ENCODE measurements at regions of chr17 and their contacts with region 1.

Region 1: DNA sequence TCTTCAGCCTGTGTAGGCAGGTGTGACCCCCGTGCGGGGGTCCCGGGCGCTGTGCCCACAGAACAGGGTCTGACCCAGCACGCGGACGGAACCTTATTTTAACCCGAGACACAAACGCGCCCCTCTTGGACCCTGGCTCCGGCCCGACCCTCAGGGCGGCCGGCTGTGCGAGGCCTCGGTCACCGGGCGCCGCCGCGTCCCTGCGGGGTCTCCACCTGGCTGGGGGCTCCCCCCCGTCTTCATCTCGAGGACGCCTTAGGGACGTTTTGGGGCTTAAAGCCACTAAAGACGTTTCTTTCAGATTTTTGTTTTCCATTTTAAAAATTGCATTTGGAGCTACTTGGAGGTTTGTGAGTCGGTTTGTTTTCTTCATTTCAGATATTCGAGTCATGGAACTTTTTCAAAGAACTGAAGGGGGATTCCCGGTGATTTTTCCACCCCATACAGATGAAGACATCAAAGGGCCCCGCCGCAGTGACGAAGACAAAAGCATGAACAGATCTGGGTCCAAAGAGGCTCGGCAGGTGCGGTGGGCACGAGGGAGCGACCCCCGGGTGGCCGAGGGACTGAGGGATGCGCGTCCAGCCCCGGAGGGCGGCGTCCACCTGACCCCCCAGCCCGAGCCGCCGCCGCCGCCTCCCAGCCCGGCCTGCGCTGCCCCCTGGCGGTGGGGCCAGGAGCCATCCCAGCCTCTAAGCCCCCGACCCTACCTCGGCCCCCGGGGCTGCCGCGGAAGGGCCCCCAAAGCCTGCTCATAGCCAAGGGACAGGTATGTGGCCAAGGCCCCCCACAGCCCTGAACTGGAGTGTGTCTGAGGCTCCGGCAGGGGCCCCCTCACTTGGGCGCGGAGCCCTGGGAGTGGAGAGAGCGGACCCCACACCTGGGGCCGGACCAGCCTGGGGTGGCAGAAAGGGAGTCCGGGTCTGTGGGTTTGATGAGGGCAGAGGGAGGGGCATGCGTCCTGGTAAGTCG is 3.8 kb upstream of the CD7 start:
- DNase-seq: peak; percentile 93
- H3K4me3 Mint-ChIP-seq: peak overlapping the region; percentile 79
- H3K27ac Mint-ChIP-seq: peak overlapping the region; percentile 97
- H3K4me1 Mint-ChIP-seq: peaks cover 42% of the 10 kb centered on the region
- H3K27me3 Mint-ChIP-seq: no peaks in the 10 kb centered on the region

Region 2: GRCh38 chr17:82244413-82245140 is 76.7 kb before region 1 on chr17:
- CTCF ChIA-PET with region 1: no interaction called
- intact Hi-C with region 1: loop called (anchors 1 kb)
- DNase-seq: peak; percentile 54
- H3K4me3 Mint-ChIP-seq: no peak overlapping the region
- H3K27ac Mint-ChIP-seq: peak overlapping the region; percentile 13
- H3K4me1 Mint-ChIP-seq: peaks cover 36% of the 10 kb centered on the region
- H3K27me3 Mint-ChIP-seq: no peaks in the 10 kb centered on the region

Region 3: GRCh38 chr17:82281502-82282238 is 39.6 kb before region 1 on chr17:
- CTCF ChIA-PET with region 1: no interaction called
- intact Hi-C with region 1: no loop called
- DNase-seq: no peak
- H3K4me3 Mint-ChIP-seq: no peak overlapping the region
- H3K27ac Mint-ChIP-seq: no peak overlapping the region
- H3K4me1 Mint-ChIP-seq: peaks cover 10% of the 10 kb centered on the region
- H3K27me3 Mint-ChIP-seq: no peaks in the 10 kb centered on the region

Measured in activated naive CD4-positive, alpha-beta T cell treated with anti-CD3 and anti-CD28 coated beads for 36 hours (primary cell).